Prostate gland (tissue), 2 donors: ENCODE measurements at regions of chr5 and their contacts with region 1.

Region 1: GRCh38 chr5:90932052-90932699 is 373.6 kb downstream of the ADGRV1 start:
- DNase-seq: peak; percentile 65
- H3K4me3 ChIP-seq: no peak overlapping the region
- H3K27ac ChIP-seq: peak overlapping the region in 1 of 2 donors; percentile 14
- H3K4me1 ChIP-seq: no peaks in the 10 kb centered on the region
- H3K27me3 ChIP-seq: no peaks in the 10 kb centered on the region
- CTCF ChIP-seq: peak; percentile 41 to 86 (median 78)
- POLR2A ChIP-seq: no peak

Region 2: DNA sequence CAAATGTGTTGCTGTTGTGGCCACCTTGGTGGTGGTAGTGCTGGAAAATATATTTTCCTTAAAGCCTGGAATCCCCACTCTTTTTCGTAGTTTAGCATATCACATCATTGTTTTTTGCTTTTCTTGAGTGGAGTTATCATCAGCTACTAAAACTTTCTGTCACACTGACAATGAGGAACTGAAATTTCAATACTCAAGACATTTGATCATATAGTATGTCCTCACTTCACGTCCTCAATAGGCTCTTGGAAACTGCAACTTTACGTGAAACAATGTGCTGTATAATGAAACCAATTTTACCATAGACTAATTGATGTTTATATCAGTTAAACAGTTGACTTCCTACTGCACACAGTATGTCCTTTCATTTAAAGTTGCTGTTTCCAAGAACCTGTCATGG is 107.7 kb before region 1 on chr5:
- intact Hi-C with region 1: no loop called
- DNase-seq: no peak
- H3K4me3 ChIP-seq: no peak overlapping the region
- H3K27ac ChIP-seq: no peak overlapping the region
- H3K4me1 ChIP-seq: no peaks in the 10 kb centered on the region
- H3K27me3 ChIP-seq: no peaks in the 10 kb centered on the region
- CTCF ChIP-seq: no peak
- POLR2A ChIP-seq: no peak

Region 3: GRCh38 chr5:90873033-90873517 is 59.1 kb before region 1 on chr5:
- intact Hi-C with region 1: loop called (anchors 5 kb)
- DNase-seq: peak; percentile 72
- H3K4me3 ChIP-seq: no peak overlapping the region
- H3K27ac ChIP-seq: peak overlapping the region in 1 of 2 donors; percentile 22
- H3K4me1 ChIP-seq: no peaks in the 10 kb centered on the region
- H3K27me3 ChIP-seq: no peaks in the 10 kb centered on the region
- CTCF ChIP-seq: no peak
- POLR2A ChIP-seq: no peak

Region 4: GRCh38 chr5:91101600-91102379 is 169.6 kb after region 1 on chr5:
- intact Hi-C with region 1: loop called (anchors 5 kb)
- DNase-seq: peak; percentile 76
- H3K4me3 ChIP-seq: no peak overlapping the region
- H3K27ac ChIP-seq: no peak overlapping the region
- H3K4me1 ChIP-seq: no peaks in the 10 kb centered on the region
- H3K27me3 ChIP-seq: no peaks in the 10 kb centered on the region
- CTCF ChIP-seq: peak; percentile 60 to 90 (median 86)
- POLR2A ChIP-seq: no peak

Region 5: DNA sequence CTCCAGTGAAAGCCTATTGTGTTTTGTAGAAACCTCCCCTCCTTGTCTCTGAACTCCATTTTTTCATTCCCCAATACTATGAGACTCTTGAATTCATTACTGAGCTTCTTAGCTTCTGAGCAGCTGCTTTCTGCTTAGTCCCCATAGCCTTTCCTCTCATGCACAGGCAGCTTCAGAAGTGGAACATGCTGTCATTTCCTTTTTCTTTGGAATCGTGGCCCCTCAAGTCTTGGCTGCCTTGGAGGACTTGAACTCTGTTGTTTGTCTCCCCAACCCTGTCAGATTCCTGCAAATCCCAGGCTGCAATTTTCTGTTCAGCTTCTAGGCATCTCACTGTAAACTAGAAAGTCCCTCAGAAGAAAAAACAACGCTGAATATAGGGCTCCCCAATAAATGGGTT is 182.5 kb after region 1 on chr5:
- intact Hi-C with region 1: no loop called
- DNase-seq: no peak
- H3K4me3 ChIP-seq: no peak overlapping the region
- H3K27ac ChIP-seq: no peak overlapping the region
- H3K4me1 ChIP-seq: peaks cover 7% of the 10 kb centered on the region
- H3K27me3 ChIP-seq: no peaks in the 10 kb centered on the region
- CTCF ChIP-seq: no peak
- POLR2A ChIP-seq: no peak